ENCODE measurements at regions of chr1 and their contacts with region 1.

Region 1: GRCh38 chr1:15128520-15129313 is 24.8 kb upstream of the TMEM51 start:
- DNase-seq: peak; percentile 83

Region 2: GRCh38 chr1:15218287-15219279 is 89.9 kb after region 1 on chr1:
- CTCF ChIA-PET with region 1: no interaction called
- POLR2A ChIA-PET with region 1: no interaction called
- DNase-seq: no peak

Region 3: GRCh38 chr1:15272009-15272788 is 143.5 kb after region 1 on chr1:
- CTCF ChIA-PET with region 1: interaction called, 25 read pairs
- POLR2A ChIA-PET with region 1: no interaction called
- DNase-seq: peak; percentile 79